Activated T-helper 1 cell treated with anti-CD3 and anti-CD28 coated beads, Interleukin-12 subunit alpha, Interleukin-12 subunit beta, Interleukin-2, Interleukin-4 antibody, amounts not matched to agents 30 ng/mL and 10 ng/mL and 1 ng/mL, durations not matched to agents 14 hours and 24 hours and 36 hours (primary cell): ENCODE measurements at regions of chr22 and their contacts with region 1.

Region 1: GRCh38 chr22:28009272-28009827 is 90.3 kb upstream of the PITPNB start:
- DNase-seq: peak; percentile 62
- H3K4me3 Mint-ChIP-seq: no peak overlapping the region
- H3K27ac Mint-ChIP-seq: no peak overlapping the region
- H3K4me1 Mint-ChIP-seq: no peaks in the 10 kb centered on the region
- H3K27me3 Mint-ChIP-seq: no peaks in the 10 kb centered on the region

Region 2: GRCh38 chr22:26756675-26757293 is 1252.6 kb before region 1 on chr22:
- intact Hi-C with region 1: loop called (anchors 2 kb)
- DNase-seq: peak; percentile 28
- H3K4me3 Mint-ChIP-seq: no peak overlapping the region
- H3K27ac Mint-ChIP-seq: no peak overlapping the region
- H3K4me1 Mint-ChIP-seq: no peaks in the 10 kb centered on the region
- H3K27me3 Mint-ChIP-seq: peaks cover 1% of the 10 kb centered on the region

Region 3: DNA sequence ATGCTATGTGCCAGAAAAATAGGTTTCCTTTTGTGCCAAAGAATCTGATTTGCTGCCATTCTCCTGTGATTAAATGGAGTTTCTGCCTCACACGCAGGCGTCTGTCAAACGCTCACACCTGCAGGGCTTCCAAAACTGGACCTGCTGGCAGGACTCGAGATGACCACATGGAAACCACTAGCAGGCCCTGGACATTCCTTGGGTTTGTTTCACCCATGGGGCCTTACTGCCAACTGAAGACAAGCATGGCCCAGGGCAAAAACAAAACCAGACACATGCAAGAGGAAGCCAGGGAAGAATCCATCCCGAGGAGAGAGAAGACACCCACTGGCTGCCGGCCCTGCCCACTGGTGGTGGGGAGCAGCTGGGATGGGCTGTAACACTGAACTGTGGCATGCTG is 151.9 kb before region 1 on chr22:
- intact Hi-C with region 1: no loop called
- DNase-seq: no peak
- H3K4me3 Mint-ChIP-seq: no peak overlapping the region
- H3K27ac Mint-ChIP-seq: no peak overlapping the region
- H3K4me1 Mint-ChIP-seq: peaks cover 10% of the 10 kb centered on the region
- H3K27me3 Mint-ChIP-seq: no peaks in the 10 kb centered on the region

Region 4: DNA sequence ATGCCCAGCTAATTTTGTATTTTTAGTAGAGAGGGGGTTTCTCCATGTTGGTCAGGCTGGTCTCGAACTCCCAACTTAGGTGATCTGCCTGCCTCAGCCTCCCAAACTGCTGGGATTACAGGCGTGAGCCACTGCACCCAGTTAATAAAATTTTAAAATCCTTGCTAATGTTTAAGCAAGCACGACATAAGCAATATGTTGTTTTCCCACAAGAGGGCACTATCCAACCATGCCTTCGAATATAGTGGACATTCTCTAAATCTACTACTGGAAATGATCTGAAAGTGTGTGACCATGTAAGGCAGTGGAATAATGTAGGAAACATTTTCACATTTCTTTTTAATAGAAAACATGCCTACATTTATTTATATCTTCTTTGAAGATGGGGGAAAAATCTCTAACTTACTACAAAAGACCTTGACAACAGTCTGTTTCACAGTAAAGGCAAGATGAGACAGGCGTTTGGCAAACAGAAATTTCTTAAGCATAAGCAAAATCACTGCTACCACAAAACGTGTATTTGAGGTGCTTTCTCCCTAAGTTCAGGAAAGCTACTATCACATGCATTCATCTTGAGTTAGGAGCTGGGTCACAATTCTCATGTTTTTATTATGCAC is 128.5 kb before region 1 on chr22:
- intact Hi-C with region 1: loop called (anchors 1 kb)
- DNase-seq: peak; percentile 11
- H3K4me3 Mint-ChIP-seq: no peak overlapping the region
- H3K27ac Mint-ChIP-seq: peak overlapping the region; percentile 44
- H3K4me1 Mint-ChIP-seq: peaks cover 35% of the 10 kb centered on the region
- H3K27me3 Mint-ChIP-seq: no peaks in the 10 kb centered on the region

Region 5: DNA sequence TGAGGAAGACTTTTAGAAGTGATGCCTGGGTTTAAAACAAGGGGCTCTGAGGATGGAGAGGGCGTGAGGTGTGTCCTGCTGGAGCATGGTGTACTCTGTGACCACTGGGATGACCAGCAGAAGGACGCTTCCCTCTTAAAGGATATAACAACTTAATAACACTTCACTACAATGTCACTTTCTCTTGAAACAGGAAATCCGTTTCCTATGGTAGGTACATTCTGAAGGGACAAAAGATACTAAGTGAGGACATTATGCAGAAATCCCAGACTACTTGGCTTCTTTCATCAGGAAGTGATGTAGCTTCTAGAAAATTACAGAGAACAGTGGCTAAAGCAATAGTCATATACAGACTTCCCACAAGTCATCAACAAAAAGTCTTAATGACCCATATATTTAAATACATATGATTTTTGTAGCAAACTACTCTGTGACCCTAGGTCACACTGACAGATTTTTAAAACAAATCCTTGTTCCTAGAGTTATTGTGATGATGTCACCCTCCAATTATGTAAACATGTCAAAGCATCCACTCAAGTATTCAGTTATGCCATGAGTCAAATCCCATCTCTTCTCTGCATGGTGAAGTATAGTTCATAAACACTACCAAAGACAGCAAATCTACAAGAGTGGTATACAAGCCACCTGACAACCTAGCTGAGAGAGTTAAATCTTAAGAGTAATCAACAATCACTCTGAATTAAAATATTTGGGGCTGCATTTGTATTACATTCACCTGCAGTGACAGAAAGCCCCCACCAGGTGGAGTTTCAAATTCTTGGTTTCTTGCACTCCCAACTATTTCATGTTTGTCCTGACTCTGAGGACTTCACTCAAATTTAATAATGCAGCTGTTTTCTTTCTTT is 123.1 kb before region 1 on chr22:
- intact Hi-C with region 1: loop called (anchors 1 kb)
- DNase-seq: no peak
- H3K4me3 Mint-ChIP-seq: no peak overlapping the region
- H3K27ac Mint-ChIP-seq: no peak overlapping the region
- H3K4me1 Mint-ChIP-seq: peaks cover 30% of the 10 kb centered on the region
- H3K27me3 Mint-ChIP-seq: no peaks in the 10 kb centered on the region